ENCODE measurements at regions of chr4 and their contacts with region 1.

Region 1: DNA sequence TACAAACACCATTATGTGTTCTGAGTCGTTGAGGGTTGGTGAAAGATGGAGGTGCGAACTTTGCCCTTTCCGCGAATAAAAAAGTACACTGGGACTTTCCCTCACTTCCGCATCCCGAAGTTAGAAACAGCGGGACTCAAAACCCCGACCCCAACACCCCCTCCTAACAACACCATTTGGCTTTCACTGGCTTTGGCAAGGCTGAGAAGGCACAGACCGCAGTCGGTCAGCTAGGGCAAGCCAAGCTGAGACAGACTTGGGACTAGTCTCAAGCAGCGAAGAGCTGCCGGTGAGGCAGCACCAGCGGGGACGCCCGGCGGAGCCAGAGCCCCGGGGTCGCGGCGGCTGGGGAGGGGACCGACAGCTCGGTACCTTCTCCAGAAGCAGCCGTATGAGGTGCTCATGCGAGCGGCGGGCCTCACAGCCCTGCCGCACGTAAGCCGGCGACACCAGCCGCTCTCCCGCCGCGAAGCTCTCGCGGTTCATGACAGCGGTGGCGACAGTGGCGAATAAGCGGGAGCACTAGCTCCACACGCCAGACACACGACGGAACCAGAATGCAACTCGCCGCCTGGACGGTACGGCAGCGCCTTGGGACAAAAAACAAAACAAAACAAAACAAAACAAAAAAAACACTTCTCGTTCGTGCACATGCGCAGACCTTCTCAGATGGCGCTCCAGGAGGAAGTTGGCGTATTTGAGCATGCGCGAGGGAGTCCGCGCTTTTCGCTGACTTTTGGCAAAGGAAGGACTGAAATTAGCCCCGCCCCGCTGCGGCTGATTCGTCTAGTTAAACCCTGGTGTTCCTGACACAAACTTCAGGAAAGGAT is at the start of gene SEPSECS:
- DNase-seq: peak; percentile 98
- H3K4me3 Mint-ChIP-seq: peak within 1 kb of the TSS; percentile 93
- H3K27ac Mint-ChIP-seq: peak within 1 kb of the TSS; percentile 87
- H3K4me1 Mint-ChIP-seq: peaks cover 17% of the 10 kb centered on the region
- H3K27me3 Mint-ChIP-seq: no peaks in the 10 kb centered on the region
- CTCF ChIP-seq: no peak
- total RNA-seq, gene SEPSECS: 9.4 and 9.7 TPM in 2 replicates

Region 2: GRCh38 chr4:25172961-25173915 is 13.1 kb after region 1 on chr4:
- CTCF ChIA-PET with region 1: interaction called, 3 read pairs
- POLR2A ChIA-PET with region 1: interaction called, 55 read pairs
- intact Hi-C with region 1: no loop called
- DNase-seq: peak; percentile 93
- H3K4me3 Mint-ChIP-seq: peak overlapping the region; percentile 12
- H3K27ac Mint-ChIP-seq: peak overlapping the region; percentile 44
- H3K4me1 Mint-ChIP-seq: peaks cover 25% of the 10 kb centered on the region
- H3K27me3 Mint-ChIP-seq: no peaks in the 10 kb centered on the region
- CTCF ChIP-seq: no peak

Region 3: DNA sequence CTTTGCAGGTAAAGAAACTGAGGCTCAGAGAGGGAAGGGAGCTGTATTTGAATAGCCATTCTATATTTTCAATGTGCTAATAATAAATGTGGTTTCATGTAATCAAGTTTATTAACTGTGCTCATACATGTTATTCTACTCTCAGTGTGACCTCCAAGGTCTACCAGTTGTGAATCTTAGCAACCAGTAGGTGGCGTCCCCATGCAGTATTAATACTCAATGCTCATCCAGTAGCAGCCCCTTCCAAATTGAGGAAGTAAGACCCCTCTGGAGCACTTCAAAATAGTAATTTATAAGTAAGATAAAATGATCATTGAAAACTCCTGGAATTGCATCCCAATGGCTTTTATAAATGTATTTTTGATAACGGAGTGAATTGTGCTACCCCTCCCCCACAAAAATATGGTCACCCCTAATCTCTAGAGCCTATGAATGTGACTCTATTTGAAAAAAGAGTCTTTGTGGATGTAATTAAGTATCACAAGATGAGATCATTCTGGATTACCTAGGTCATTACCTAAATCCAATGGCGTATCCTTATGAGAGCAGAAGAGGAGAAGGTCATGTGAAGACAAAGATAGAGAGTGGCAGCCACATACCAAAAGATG is 20.5 kb after region 1 on chr4:
- CTCF ChIA-PET with region 1: interaction called, 8 read pairs
- POLR2A ChIA-PET with region 1: interaction called, 24 read pairs
- intact Hi-C with region 1: no loop called
- DNase-seq: peak; percentile 64
- H3K4me3 Mint-ChIP-seq: no peak overlapping the region
- H3K27ac Mint-ChIP-seq: no peak overlapping the region
- H3K4me1 Mint-ChIP-seq: no peaks in the 10 kb centered on the region
- H3K27me3 Mint-ChIP-seq: no peaks in the 10 kb centered on the region
- CTCF ChIP-seq: peak; percentile 62

Region 4: DNA sequence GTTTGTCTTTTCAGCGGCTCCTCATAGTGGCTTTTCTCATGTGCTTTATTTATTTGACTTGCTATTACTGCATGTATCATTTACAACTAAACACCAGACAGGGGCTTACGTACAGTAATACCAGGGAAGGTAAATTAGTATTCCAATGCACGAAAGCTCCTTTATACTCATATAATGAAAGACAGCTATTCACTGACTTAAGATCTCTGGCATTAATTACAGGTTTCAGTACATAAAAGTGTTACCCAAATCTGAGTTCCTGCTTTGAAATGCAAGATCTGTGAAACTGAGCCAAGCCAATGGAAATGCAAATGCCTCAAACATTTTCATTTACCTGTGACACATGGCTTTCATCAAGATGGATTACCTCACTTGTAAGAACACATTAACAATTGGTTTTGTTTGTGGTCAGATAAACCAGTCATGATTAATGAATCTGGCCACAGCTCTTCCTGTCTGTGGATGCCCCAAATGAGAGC is 324.2 kb after region 1 on chr4:
- CTCF ChIA-PET with region 1: no interaction called
- POLR2A ChIA-PET with region 1: no interaction called
- intact Hi-C with region 1: no loop called
- DNase-seq: peak; percentile 33
- H3K4me3 Mint-ChIP-seq: no peak overlapping the region
- H3K27ac Mint-ChIP-seq: no peak overlapping the region
- H3K4me1 Mint-ChIP-seq: no peaks in the 10 kb centered on the region
- H3K27me3 Mint-ChIP-seq: no peaks in the 10 kb centered on the region
- CTCF ChIP-seq: no peak